K562 (cell line): ENCODE measurements at regions of chr2 and their contacts with region 1.

Region 1: DNA sequence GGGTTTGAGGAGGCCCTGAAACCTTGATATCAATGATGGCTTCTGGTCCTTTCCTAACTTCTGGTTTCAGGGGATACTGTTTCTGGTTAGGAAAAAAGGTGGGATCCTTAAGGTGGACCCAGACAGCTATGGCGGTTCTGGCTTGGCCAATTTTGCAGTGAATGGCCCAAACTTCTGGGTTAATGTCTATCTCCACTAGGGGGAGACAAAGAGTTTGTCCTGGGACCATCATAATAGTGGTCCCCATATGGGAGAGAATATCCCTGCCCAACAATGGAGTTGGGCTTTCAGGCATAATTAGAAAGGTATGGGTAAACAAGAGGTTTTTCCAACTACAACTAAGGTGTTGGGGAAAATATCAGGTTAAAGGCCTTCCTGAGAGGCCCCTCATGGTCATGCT is 273.5 kb downstream of the CALCRL start:
- DNase-seq: peak; percentile 41 to 64 (median 56)
- ATAC-seq: peak; percentile 94
- H3K4me3 ChIP-seq: no peak overlapping the region
- H3K27ac ChIP-seq: no peak overlapping the region
- H3K4me1 ChIP-seq: no peaks in the 10 kb centered on the region
- H3K27me3 ChIP-seq: no peaks in the 10 kb centered on the region
- CTCF ChIP-seq: peak; percentile 55 to 72 (median 69); a peak in 5 of 6 replicates
- EP300 ChIP-seq: no peak
- POLR2A ChIP-seq: no peak
- RAD21 ChIP-seq: peak; percentile 32 to 54; a peak in 3 of 4 replicates

Region 2: DNA sequence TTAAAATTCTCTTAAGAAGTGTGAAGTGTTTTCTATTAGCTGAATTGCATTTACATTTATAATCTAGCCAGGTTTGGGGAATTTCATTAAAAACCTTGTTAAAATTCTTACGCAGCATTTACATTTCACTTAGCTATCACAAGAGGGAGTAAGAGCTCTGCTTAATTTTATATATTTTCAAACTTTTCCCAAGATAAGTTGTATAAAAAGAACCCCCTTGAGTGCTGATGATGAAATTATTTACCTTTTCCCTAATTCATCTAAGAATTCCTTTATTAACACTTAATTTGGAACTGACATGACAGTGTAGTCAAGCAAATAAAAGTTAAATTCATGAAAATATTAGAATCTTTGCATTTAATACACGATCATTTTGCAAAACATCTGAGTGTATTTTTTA is 271.4 kb before region 1 on chr2:
- CTCF ChIA-PET with region 1: no interaction called
- POLR2A ChIA-PET with region 1: no interaction called
- in situ Hi-C with region 1: no loop called
- intact Hi-C with region 1: loop called (anchors 5 kb)
- DNase-seq: no peak
- ATAC-seq: 0 out of 3 replicates have a peak, but pooled peaks have one; percentile 43
- H3K4me3 ChIP-seq: no peak overlapping the region
- H3K27ac ChIP-seq: no peak overlapping the region
- H3K4me1 ChIP-seq: no peaks in the 10 kb centered on the region; a peak in 1 of 5 replicates
- H3K27me3 ChIP-seq: no peaks in the 10 kb centered on the region
- CTCF ChIP-seq: peak in 2 of 3 experiments; percentile 30 to 62; a peak in 4 of 6 replicates
- EP300 ChIP-seq: no peak
- POLR2A ChIP-seq: no peak
- RAD21 ChIP-seq: peak; percentile 40 to 60